Naive thymus-derived CD4-positive, alpha-beta T cell (primary cell): ENCODE measurements at regions of chr12 and their contacts with region 1.

Region 1: GRCh38 chr12:92208613-92209121 is 63.0 kb upstream of the BTG1 start:
- DNase-seq: peak in 7 of 9 donors; percentile 55 to 76 (median 63)
- ATAC-seq: peak; percentile 92
- H3K4me3 ChIP-seq: peak overlapping the region; percentile 29
- H3K4me3 Mint-ChIP-seq: peak overlapping the region; percentile 58 to 90 (median 76)
- H3K27ac ChIP-seq: peak overlapping the region; percentile 48
- H3K27ac Mint-ChIP-seq: peak overlapping the region; percentile 72 to 97 (median 95)
- H3K4me1 ChIP-seq: peaks cover 18 to 25% of the 10 kb centered on the region in 2 donors
- H3K4me1 Mint-ChIP-seq: peaks cover 19 to 55% (median 41%) of the 10 kb centered on the region in 7 donors
- H3K27me3 ChIP-seq: no peaks in the 10 kb centered on the region
- H3K27me3 Mint-ChIP-seq: no peaks in the 10 kb centered on the region

Region 2: GRCh38 chr12:91577586-91578539 is 630.8 kb before region 1 on chr12:
- CTCF ChIA-PET with region 1: no interaction called
- POLR2A ChIA-PET with region 1: interaction called, 3 read pairs
- intact Hi-C with region 1: loop called in 1 of 2 experiments (anchors 1 kb)
- DNase-seq: peak in 6 of 9 donors; percentile 30 to 53 (median 39)
- ATAC-seq: peak; percentile 88
- H3K4me3 ChIP-seq: peak overlapping the region; percentile 39
- H3K4me3 Mint-ChIP-seq: peak overlapping the region; percentile 16 to 93 (median 84)
- H3K27ac ChIP-seq: no peak overlapping the region
- H3K27ac Mint-ChIP-seq: peak overlapping the region; percentile 14 to 94 (median 81)
- H3K4me1 ChIP-seq: peaks cover 0 to 5% of the 10 kb centered on the region in 2 donors
- H3K4me1 Mint-ChIP-seq: peaks cover 12 to 36% (median 19%) of the 10 kb centered on the region in 7 donors
- H3K27me3 ChIP-seq: no peaks in the 10 kb centered on the region
- H3K27me3 Mint-ChIP-seq: peaks cover 0 to 3% (median 0%) of the 10 kb centered on the region in 5 donors

Region 3: GRCh38 chr12:91991399-91992187 is 217.1 kb before region 1 on chr12:
- CTCF ChIA-PET with region 1: no interaction called
- POLR2A ChIA-PET with region 1: no interaction called
- intact Hi-C with region 1: loop called in 1 of 2 experiments (anchors 1 kb)
- DNase-seq: peak in 5 of 9 donors; percentile 22 to 64 (median 48)
- ATAC-seq: peak; percentile 83
- H3K4me3 ChIP-seq: no peak overlapping the region
- H3K4me3 Mint-ChIP-seq: peak overlapping the region in 5 of 10 donors; percentile 18 to 50 (median 32)
- H3K27ac ChIP-seq: peak overlapping the region; percentile 26
- H3K27ac Mint-ChIP-seq: peak overlapping the region in 7 of 9 donors; percentile 8 to 92 (median 70)
- H3K4me1 ChIP-seq: peaks cover 9 to 27% of the 10 kb centered on the region in 2 donors
- H3K4me1 Mint-ChIP-seq: peaks cover 9 to 92% (median 79%) of the 10 kb centered on the region in 7 donors
- H3K27me3 ChIP-seq: no peaks in the 10 kb centered on the region
- H3K27me3 Mint-ChIP-seq: no peaks in the 10 kb centered on the region

Region 4: DNA sequence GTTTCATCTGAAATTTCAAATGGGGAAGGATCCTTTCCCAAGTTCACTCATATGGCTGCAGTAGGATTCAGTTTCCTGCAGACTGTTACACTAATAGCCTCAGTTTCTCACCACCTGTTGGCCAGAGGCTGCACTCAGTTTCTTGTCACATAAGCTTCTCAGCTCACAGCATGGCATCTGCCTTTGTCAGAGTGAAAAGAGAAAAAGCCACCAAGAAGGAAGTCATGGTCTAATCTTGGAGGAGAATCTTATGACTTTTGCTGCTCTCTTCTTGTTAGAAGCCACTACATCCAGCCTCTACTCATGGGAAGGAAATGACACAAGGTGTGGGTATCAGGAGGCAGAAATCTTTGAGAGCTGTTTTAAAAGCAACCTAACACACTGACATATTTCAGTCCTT is 23.6 kb before region 1 on chr12:
- CTCF ChIA-PET with region 1: no interaction called
- POLR2A ChIA-PET with region 1: interaction called, 5 read pairs
- intact Hi-C with region 1: loop called (anchors 1 kb)
- DNase-seq: peak in 8 of 9 donors; percentile 30 to 70 (median 56)
- ATAC-seq: peak; percentile 88
- H3K4me3 ChIP-seq: no peak overlapping the region
- H3K4me3 Mint-ChIP-seq: peak overlapping the region; percentile 28 to 77 (median 68)
- H3K27ac ChIP-seq: peak overlapping the region; percentile 74
- H3K27ac Mint-ChIP-seq: peak overlapping the region; percentile 83 to 96 (median 93)
- H3K4me1 ChIP-seq: peaks cover 22 to 29% of the 10 kb centered on the region in 2 donors
- H3K4me1 Mint-ChIP-seq: peaks cover 23 to 71% (median 60%) of the 10 kb centered on the region in 7 donors
- H3K27me3 ChIP-seq: no peaks in the 10 kb centered on the region
- H3K27me3 Mint-ChIP-seq: no peaks in the 10 kb centered on the region

Region 5: GRCh38 chr12:92297932-92298696 is 89.4 kb after region 1 on chr12:
- CTCF ChIA-PET with region 1: no interaction called
- POLR2A ChIA-PET with region 1: interaction called, 3 read pairs
- intact Hi-C with region 1: loop called in 1 of 2 experiments (anchors 5 kb)
- DNase-seq: peak in 7 of 9 donors; percentile 29 to 75 (median 58)
- ATAC-seq: peak; percentile 83
- H3K4me3 ChIP-seq: no peak overlapping the region
- H3K4me3 Mint-ChIP-seq: peak overlapping the region in 9 of 10 donors; percentile 9 to 80 (median 63)
- H3K27ac ChIP-seq: peak overlapping the region; percentile 57
- H3K27ac Mint-ChIP-seq: peak overlapping the region in 2 of 9 donors; percentile 85 to 96
- H3K4me1 ChIP-seq: peaks cover 17 to 42% of the 10 kb centered on the region in 2 donors
- H3K4me1 Mint-ChIP-seq: peaks cover 8 to 33% (median 27%) of the 10 kb centered on the region in 7 donors
- H3K27me3 ChIP-seq: no peaks in the 10 kb centered on the region
- H3K27me3 Mint-ChIP-seq: no peaks in the 10 kb centered on the region

Region 6: GRCh38 chr12:92396647-92397252 is 188.1 kb after region 1 on chr12:
- CTCF ChIA-PET with region 1: interaction called, 4 read pairs
- POLR2A ChIA-PET with region 1: interaction called, 10 read pairs
- intact Hi-C with region 1: loop called (anchors 1 to 2 kb)
- DNase-seq: no peak
- ATAC-seq: no peak
- H3K4me3 ChIP-seq: no peak overlapping the region
- H3K4me3 Mint-ChIP-seq: peak overlapping the region in 8 of 10 donors; percentile 9 to 76 (median 62)
- H3K27ac ChIP-seq: peak overlapping the region; percentile 85
- H3K27ac Mint-ChIP-seq: peak overlapping the region; percentile 90 to 100 (median 98)
- H3K4me1 ChIP-seq: peaks cover 76 to 84% of the 10 kb centered on the region in 2 donors
- H3K4me1 Mint-ChIP-seq: peaks cover 56 to 100% (median 93%) of the 10 kb centered on the region in 7 donors
- H3K27me3 ChIP-seq: no peaks in the 10 kb centered on the region
- H3K27me3 Mint-ChIP-seq: no peaks in the 10 kb centered on the region